ENCODE measurements at regions of chr10 and their contacts with region 1.

Region 1: DNA sequence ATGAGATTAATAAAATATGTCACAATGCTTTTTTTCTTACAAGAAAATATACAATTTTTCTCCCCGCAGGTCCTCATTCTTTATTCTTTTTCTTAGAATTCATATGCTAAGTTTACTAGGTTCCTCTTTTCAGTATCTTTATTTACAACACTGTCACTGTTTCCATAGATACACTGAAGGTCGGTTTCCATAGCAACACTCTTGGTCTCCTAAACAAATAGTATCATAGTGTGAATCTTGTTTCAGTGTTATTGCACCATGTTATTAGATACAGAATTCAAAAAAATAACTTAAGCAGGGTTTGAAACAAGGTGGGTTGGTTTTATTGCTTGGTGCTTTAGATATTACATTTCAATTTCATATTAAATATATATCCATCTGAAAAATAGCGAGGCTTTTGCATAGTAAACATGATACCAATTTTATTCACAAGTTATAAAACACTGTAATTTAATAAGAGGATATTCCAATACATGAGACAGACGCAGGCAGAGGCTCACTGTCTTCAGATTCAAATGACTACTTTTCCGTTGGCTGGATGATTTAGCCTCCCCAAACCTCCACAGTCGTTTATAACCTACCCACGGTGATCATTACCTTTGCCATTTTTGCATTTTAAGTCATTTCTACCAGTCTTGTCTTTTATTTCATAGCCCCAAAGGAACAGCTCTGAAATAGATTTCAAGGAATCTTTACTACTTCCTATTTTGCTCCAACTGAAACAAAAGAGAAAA is 88.9 kb upstream of the KLF6 start:
- DNase-seq: no peak
- ATAC-seq: peak; percentile 43
- H3K4me3 Mint-ChIP-seq: peak overlapping the region; percentile 45
- H3K27ac Mint-ChIP-seq: peak overlapping the region; percentile 96
- H3K4me1 Mint-ChIP-seq: peaks cover 60% of the 10 kb centered on the region
- H3K27me3 Mint-ChIP-seq: no peaks in the 10 kb centered on the region
- CTCF ChIP-seq: no peak

Region 2: DNA sequence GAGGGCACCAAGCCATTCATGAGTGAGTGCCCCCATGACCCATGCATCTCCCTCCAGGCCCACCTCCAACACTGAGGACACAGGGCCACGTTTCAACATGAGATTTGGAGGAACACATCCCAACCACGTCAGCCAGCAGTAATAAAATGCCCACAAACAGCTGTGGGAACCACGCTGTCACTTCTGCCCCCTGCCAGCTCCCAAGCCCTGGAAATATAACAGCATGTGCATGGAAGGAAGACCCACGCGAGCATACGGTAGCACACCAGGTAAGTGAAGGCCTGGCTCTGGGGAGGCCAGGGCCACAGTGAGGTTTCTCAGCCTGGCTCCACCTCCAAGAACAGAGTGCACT is 975.4 kb before region 1 on chr10:
- CTCF ChIA-PET with region 1: no interaction called
- POLR2A ChIA-PET with region 1: no interaction called
- intact Hi-C with region 1: no loop called
- DNase-seq: no peak
- ATAC-seq: no peak
- H3K4me3 Mint-ChIP-seq: no peak overlapping the region
- H3K27ac Mint-ChIP-seq: no peak overlapping the region
- H3K4me1 Mint-ChIP-seq: no peaks in the 10 kb centered on the region
- H3K27me3 Mint-ChIP-seq: peaks cover 4% of the 10 kb centered on the region
- CTCF ChIP-seq: no peak

Region 3: GRCh38 chr10:3482200-3483138 is 391.4 kb before region 1 on chr10:
- CTCF ChIA-PET with region 1: no interaction called
- POLR2A ChIA-PET with region 1: no interaction called
- intact Hi-C with region 1: loop called (anchors 1 kb)
- DNase-seq: no peak
- ATAC-seq: no peak
- H3K4me3 Mint-ChIP-seq: peak overlapping the region; percentile 36
- H3K27ac Mint-ChIP-seq: peak overlapping the region; percentile 9
- H3K4me1 Mint-ChIP-seq: peaks cover 68% of the 10 kb centered on the region
- H3K27me3 Mint-ChIP-seq: no peaks in the 10 kb centered on the region
- CTCF ChIP-seq: no peak

Region 4: GRCh38 chr10:3805791-3806461 is 68.0 kb before region 1 on chr10:
- CTCF ChIA-PET with region 1: no interaction called
- POLR2A ChIA-PET with region 1: interaction called, 7 read pairs
- intact Hi-C with region 1: loop called (anchors 1 kb)
- DNase-seq: peak; percentile 47
- ATAC-seq: peak; percentile 69
- H3K4me3 Mint-ChIP-seq: peak overlapping the region; percentile 73
- H3K27ac Mint-ChIP-seq: peak overlapping the region; percentile 92
- H3K4me1 Mint-ChIP-seq: peaks cover 69% of the 10 kb centered on the region
- H3K27me3 Mint-ChIP-seq: no peaks in the 10 kb centered on the region
- CTCF ChIP-seq: no peak

Region 5: GRCh38 chr10:3852147-3852904 is 21.6 kb before region 1 on chr10:
- CTCF ChIA-PET with region 1: no interaction called
- POLR2A ChIA-PET with region 1: interaction called, 35 read pairs
- intact Hi-C with region 1: loop called (anchors 1 kb)
- DNase-seq: no peak
- ATAC-seq: peak; percentile 80
- H3K4me3 Mint-ChIP-seq: peak overlapping the region; percentile 56
- H3K27ac Mint-ChIP-seq: peak overlapping the region; percentile 88
- H3K4me1 Mint-ChIP-seq: peaks cover 36% of the 10 kb centered on the region
- H3K27me3 Mint-ChIP-seq: no peaks in the 10 kb centered on the region
- CTCF ChIP-seq: no peak

Region 6: DNA sequence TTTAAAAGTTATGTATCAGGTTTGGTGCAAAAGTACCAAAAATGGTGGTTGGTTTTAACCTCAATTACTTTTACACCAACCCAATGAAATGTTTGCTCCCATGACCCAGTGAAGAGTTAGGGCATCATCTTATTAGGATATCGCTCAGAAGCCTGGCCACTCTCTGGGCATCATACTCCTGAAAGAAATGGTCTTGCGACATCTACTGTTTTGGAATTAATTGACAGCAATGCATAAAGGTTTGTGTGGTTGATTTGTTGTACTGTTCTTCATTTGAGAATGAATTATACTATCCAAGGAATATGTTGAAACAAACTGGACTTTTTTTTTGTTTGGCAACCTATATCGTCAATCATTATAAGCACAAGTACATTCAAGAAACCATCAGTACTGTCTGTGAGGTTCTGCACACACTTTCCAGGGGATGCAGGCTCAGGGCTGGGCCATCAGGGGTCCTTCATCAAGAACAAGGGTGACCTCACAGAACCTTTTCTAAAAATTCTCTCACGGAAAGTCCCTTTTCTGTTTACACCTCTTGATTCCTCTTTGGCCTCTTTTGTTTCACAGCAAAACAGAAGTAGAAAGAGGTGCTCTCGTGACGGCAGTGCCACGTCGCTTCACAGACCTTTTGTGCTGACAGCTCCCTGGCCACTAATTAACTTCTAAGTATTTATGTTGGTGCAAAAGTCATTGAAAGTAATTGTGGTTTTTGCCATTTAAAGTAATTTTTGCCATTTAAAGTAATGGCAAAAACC is 28.3 kb after region 1 on chr10:
- CTCF ChIA-PET with region 1: no interaction called
- POLR2A ChIA-PET with region 1: interaction called, 10 read pairs
- intact Hi-C with region 1: loop called (anchors 1 kb)
- DNase-seq: peak; percentile 30
- ATAC-seq: peak; percentile 87
- H3K4me3 Mint-ChIP-seq: peak overlapping the region; percentile 58
- H3K27ac Mint-ChIP-seq: peak overlapping the region; percentile 87
- H3K4me1 Mint-ChIP-seq: peaks cover 54% of the 10 kb centered on the region
- H3K27me3 Mint-ChIP-seq: no peaks in the 10 kb centered on the region
- CTCF ChIP-seq: no peak

Region 7: DNA sequence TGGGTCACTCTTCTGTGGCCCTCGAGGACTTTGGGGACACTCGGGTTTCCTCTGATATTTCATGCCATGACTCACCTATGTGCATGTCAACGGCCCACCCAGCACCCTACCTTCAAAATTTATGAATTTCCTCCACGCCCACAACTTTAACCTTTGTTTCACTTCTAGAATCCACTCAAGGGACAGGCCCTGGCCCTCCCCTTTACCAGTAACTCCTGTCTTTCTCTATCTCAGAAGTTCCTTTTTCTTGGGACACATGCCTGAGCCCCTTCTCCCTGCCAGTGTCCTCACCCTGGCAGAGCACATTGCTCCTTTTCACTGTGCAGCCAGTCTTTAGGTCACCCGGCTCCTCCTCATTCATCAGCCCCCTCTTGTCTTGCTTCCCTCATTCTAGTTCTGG is 193.6 kb after region 1 on chr10:
- CTCF ChIA-PET with region 1: no interaction called
- POLR2A ChIA-PET with region 1: interaction called, 7 read pairs
- intact Hi-C with region 1: loop called (anchors 5 kb)
- DNase-seq: no peak
- ATAC-seq: peak; percentile 86
- H3K4me3 Mint-ChIP-seq: no peak overlapping the region
- H3K27ac Mint-ChIP-seq: no peak overlapping the region
- H3K4me1 Mint-ChIP-seq: no peaks in the 10 kb centered on the region
- H3K27me3 Mint-ChIP-seq: no peaks in the 10 kb centered on the region
- CTCF ChIP-seq: no peak

Region 8: GRCh38 chr10:4450956-4451908 is 577.3 kb after region 1 on chr10:
- CTCF ChIA-PET with region 1: no interaction called
- POLR2A ChIA-PET with region 1: no interaction called
- intact Hi-C with region 1: no loop called
- DNase-seq: no peak
- ATAC-seq: peak; percentile 40
- H3K4me3 Mint-ChIP-seq: no peak overlapping the region
- H3K27ac Mint-ChIP-seq: no peak overlapping the region
- H3K4me1 Mint-ChIP-seq: peaks cover 8% of the 10 kb centered on the region
- H3K27me3 Mint-ChIP-seq: peaks cover 9% of the 10 kb centered on the region
- CTCF ChIP-seq: no peak

Region 9: DNA sequence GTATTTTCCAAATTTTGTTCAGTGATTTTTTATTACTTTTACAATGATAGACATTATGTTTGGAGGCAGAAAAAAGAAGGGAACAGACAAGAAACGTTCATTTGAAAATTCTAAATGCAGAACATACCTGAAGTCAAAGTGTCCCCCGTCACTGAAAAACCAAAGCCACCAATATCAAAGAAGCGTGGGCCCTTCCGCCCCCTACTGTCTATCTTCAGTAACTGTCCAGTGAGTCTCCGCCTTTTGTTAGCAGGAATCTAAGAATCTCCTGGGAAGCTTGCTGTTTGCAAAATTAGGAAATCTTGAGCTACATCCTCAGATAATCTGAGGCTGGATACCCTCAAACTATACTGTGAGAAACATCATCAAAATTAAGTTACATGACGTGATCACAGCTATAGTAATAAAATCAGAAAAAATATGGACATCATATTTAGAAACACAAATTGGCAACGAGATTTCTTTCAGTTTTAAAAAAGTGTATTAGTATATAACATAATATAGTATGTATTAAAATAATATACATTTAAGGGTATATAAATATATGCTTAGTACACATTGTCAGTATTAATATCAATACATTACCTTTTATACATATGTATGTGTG is 782.8 kb after region 1 on chr10:
- CTCF ChIA-PET with region 1: no interaction called
- POLR2A ChIA-PET with region 1: no interaction called
- intact Hi-C with region 1: loop called (anchors 10 kb)
- DNase-seq: no peak
- ATAC-seq: peak; percentile 52
- H3K4me3 Mint-ChIP-seq: no peak overlapping the region
- H3K27ac Mint-ChIP-seq: no peak overlapping the region
- H3K4me1 Mint-ChIP-seq: peaks cover 5% of the 10 kb centered on the region
- H3K27me3 Mint-ChIP-seq: peaks cover 2% of the 10 kb centered on the region
- CTCF ChIP-seq: no peak

Region 10: DNA sequence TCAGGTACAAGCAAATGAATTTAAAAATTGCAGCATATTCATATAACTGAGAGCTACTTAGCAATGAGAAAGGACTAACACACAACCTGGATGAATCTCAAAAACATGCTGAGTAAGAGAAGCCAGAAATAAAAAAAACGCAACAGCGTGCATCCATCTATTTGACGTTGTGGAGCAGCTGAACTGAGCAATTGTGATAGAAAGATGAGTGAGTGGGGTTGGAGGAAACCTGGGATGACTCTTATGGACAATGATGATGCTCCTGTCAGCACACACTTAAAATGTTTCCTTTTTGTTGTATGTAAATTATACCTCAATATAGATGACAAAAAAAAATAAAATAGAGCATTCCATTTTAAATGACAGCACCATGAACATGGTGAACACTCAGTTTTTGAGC is 916.1 kb after region 1 on chr10:
- CTCF ChIA-PET with region 1: no interaction called
- POLR2A ChIA-PET with region 1: no interaction called
- intact Hi-C with region 1: no loop called
- DNase-seq: no peak
- ATAC-seq: no peak
- H3K4me3 Mint-ChIP-seq: no peak overlapping the region
- H3K27ac Mint-ChIP-seq: no peak overlapping the region
- H3K4me1 Mint-ChIP-seq: no peaks in the 10 kb centered on the region
- H3K27me3 Mint-ChIP-seq: peaks cover 3% of the 10 kb centered on the region
- CTCF ChIP-seq: no peak

Measured in activated B cell treated with CpG ODN at 0.5 μM for 24 hours (primary cell).